Activated CD8-positive, alpha-beta T cell treated with anti-CD3 and anti-CD28 coated beads for 36 hours (primary cell): ENCODE measurements at regions of chr3 and their contacts with region 1.

Region 1: DNA sequence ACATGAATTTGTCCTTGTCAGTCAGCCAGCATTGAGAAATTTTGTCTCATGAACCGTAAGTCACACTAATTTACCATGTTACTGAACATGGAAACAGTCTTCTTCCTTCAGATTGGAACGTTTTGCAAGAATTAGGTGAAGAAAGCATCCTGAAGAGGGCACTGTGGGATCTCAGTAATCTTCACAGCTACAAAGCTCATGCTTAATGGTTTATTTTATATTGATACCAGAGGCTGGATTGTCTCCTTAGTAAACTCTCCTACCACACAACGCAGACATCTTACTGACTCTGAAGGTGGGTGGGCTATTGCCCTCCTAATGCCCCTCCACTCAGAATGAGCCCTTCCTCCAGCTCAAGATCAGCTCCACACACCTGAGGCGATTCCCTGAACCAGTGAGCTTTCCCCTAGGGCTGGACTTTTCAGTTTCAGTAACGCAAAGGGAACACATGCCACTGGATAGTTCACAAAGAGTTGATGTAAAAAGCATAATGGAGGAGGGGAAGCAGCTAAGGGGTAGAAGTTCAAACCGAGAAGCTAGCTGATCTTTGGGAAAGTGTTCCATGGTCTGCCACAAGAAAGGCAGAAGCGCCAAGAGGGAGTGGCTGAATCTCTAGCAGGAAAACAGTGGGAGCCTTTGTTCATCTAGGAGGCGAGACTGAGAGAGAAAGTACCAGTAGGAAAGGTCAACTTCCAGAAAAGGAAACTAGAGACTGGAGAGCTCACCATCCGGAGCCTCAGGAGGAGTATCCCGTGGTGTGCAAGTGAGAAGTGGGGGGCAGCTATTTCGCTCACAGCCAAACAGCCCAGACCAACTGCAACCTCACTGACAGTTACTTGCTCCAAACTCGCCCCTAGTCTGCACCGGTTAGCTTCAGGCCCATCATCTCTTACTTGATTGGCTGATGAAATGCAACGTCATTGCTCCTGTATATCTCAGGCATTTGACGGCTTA is at the start of gene SLC9C1:
- DNase-seq: peak; percentile 57
- ATAC-seq: peak; percentile 69
- H3K4me3 Mint-ChIP-seq: peak within 1 kb of the TSS; percentile 41
- H3K27ac Mint-ChIP-seq: no peak within 1 kb of the TSS
- H3K4me1 Mint-ChIP-seq: peaks cover 22% of the 10 kb centered on the region
- H3K27me3 Mint-ChIP-seq: no peaks in the 10 kb centered on the region
- CTCF ChIP-seq: peak; percentile 54
- total RNA-seq, gene SLC9C1: not detected

Region 2: GRCh38 chr3:112136959-112137693 is 156.5 kb before region 1 on chr3:
- CTCF ChIA-PET with region 1: interaction called, 22 read pairs
- POLR2A ChIA-PET with region 1: no interaction called
- intact Hi-C with region 1: loop called (anchors 10 kb)
- DNase-seq: peak; percentile 65
- ATAC-seq: no peak
- H3K4me3 Mint-ChIP-seq: no peak overlapping the region
- H3K27ac Mint-ChIP-seq: peak overlapping the region; percentile 44
- H3K4me1 Mint-ChIP-seq: peaks cover 57% of the 10 kb centered on the region
- H3K27me3 Mint-ChIP-seq: no peaks in the 10 kb centered on the region
- CTCF ChIP-seq: peak; percentile 75

Region 3: GRCh38 chr3:112303764-112304325 is 10.2 kb after region 1 on chr3:
- CTCF ChIA-PET with region 1: interaction called, 66 read pairs
- POLR2A ChIA-PET with region 1: no interaction called
- intact Hi-C with region 1: no loop called
- DNase-seq: peak; percentile 31
- ATAC-seq: peak; percentile 65
- H3K4me3 Mint-ChIP-seq: no peak overlapping the region
- H3K27ac Mint-ChIP-seq: no peak overlapping the region
- H3K4me1 Mint-ChIP-seq: peaks cover under 1% of the 10 kb centered on the region
- H3K27me3 Mint-ChIP-seq: no peaks in the 10 kb centered on the region
- CTCF ChIP-seq: no peak

Region 4: GRCh38 chr3:112333002-112333380 is 39.3 kb after region 1 on chr3 and contains the start of gene CD200:
- CTCF ChIA-PET with region 1: interaction called, 22 read pairs
- POLR2A ChIA-PET with region 1: no interaction called
- intact Hi-C with region 1: no loop called
- DNase-seq: peak; percentile 66
- ATAC-seq: peak; percentile 70
- H3K4me3 Mint-ChIP-seq: peak within 1 kb of the TSS; percentile 90
- H3K27ac Mint-ChIP-seq: peak within 1 kb of the TSS; percentile 93
- H3K4me1 Mint-ChIP-seq: peaks cover 38% of the 10 kb centered on the region
- H3K27me3 Mint-ChIP-seq: no peaks in the 10 kb centered on the region
- CTCF ChIP-seq: no peak
- total RNA-seq, gene CD200: 15.7 to 16.7 TPM

Region 5: DNA sequence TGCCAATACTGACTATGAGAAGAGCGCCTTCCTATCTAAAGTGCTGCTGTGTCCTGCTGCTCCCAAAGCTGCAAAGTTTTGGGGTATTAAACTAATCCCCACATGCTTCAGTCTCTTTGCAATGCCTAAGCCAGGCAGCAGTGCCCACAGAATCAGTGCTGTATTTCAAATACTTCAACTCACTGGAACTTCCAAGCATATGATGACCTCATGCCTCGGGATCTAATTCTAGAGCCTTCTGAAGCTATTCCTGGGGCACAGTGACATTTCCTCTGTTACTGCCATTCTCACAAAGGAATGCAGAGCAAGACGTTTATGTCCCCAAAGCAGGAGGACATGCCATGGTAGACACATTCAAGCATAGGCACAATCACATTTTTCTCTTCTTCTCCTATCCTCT is 117.8 kb after region 1 on chr3:
- CTCF ChIA-PET with region 1: no interaction called
- POLR2A ChIA-PET with region 1: no interaction called
- intact Hi-C with region 1: no loop called
- DNase-seq: no peak
- ATAC-seq: no peak
- H3K4me3 Mint-ChIP-seq: no peak overlapping the region
- H3K27ac Mint-ChIP-seq: no peak overlapping the region
- H3K4me1 Mint-ChIP-seq: peaks cover 12% of the 10 kb centered on the region
- H3K27me3 Mint-ChIP-seq: no peaks in the 10 kb centered on the region
- CTCF ChIP-seq: no peak

Region 6: GRCh38 chr3:112519424-112520001 is 225.9 kb after region 1 on chr3:
- CTCF ChIA-PET with region 1: interaction called, 38 read pairs
- POLR2A ChIA-PET with region 1: interaction called, 3 read pairs
- intact Hi-C with region 1: no loop called
- DNase-seq: peak; percentile 47
- ATAC-seq: peak; percentile 80
- H3K4me3 Mint-ChIP-seq: no peak overlapping the region
- H3K27ac Mint-ChIP-seq: peak overlapping the region; percentile 71
- H3K4me1 Mint-ChIP-seq: peaks cover 24% of the 10 kb centered on the region
- H3K27me3 Mint-ChIP-seq: no peaks in the 10 kb centered on the region
- CTCF ChIP-seq: peak; percentile 73